ENCODE measurements at regions of chr17 and their contacts with region 1.

Region 1: GRCh38 chr17:35119368-35120165 is at the start of gene RAD51D:
- DNase-seq: peak; percentile 87
- H3K4me3 ChIP-seq: peak within 1 kb of the TSS; percentile 93
- H3K27ac ChIP-seq: peak within 1 kb of the TSS; percentile 31
- H3K4me1 ChIP-seq: peaks cover 10% of the 10 kb centered on the region
- CTCF ChIP-seq: peak; percentile 90
- total RNA-seq, gene RAD51D: 18.9 and 22.4 TPM in 2 replicates

Region 2: DNA sequence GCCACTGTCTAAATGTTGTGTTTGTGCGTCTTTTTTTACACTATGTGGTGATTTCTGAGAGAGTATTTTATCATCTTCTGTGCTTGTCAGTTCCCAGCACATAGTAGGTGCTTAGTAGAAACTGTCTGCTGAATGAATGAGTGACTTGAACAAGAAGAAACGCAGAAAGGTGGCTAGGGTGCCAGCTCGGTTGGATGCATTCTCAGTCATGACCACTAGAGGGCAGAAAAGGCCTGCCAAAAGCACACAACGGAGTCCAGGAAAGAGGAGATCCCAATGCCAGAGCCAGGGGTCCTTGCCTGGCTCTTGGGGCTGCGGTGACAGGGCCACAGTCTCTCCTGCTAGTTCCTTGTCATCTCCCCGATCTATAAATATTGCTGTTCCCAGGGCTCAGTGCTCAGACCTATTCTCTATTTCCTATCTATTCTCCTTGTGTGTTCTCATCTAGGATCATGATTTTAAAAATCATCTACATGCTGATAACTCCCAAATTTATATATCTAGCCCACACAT is 699.3 kb before region 1 on chr17:
- CTCF ChIA-PET with region 1: no interaction called
- POLR2A ChIA-PET with region 1: no interaction called
- intact Hi-C with region 1: loop called (anchors 10 kb)
- DNase-seq: peak; percentile 76
- H3K4me3 ChIP-seq: no peak overlapping the region
- H3K27ac ChIP-seq: no peak overlapping the region
- H3K4me1 ChIP-seq: no peaks in the 10 kb centered on the region
- CTCF ChIP-seq: peak; percentile 99

Region 3: DNA sequence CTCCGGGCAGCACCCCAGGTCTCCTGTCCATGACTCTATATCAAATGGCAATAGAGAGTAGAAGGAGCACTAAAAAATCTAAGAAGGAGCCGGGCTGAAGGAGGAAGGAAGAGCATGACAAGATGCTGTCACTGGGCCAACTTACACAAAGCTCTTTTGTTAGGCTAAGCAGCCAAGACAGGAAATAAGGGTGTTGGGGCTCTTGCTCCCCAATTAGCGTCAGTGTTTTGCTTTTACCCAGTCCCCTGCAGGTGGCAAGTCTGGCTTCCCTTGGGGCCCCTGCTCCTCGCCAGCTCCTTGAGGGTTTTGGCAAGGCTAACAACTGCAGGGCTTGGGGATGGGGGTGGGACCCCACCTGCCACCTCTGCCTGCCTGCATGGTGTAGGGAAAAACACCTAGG is 278.8 kb before region 1 on chr17:
- CTCF ChIA-PET with region 1: no interaction called
- POLR2A ChIA-PET with region 1: no interaction called
- intact Hi-C with region 1: loop called (anchors 10 kb)
- DNase-seq: peak; percentile 89
- H3K4me3 ChIP-seq: peak overlapping the region; percentile 39
- H3K27ac ChIP-seq: peak overlapping the region; percentile 84
- H3K4me1 ChIP-seq: peaks cover 66% of the 10 kb centered on the region
- CTCF ChIP-seq: no peak

Region 4: DNA sequence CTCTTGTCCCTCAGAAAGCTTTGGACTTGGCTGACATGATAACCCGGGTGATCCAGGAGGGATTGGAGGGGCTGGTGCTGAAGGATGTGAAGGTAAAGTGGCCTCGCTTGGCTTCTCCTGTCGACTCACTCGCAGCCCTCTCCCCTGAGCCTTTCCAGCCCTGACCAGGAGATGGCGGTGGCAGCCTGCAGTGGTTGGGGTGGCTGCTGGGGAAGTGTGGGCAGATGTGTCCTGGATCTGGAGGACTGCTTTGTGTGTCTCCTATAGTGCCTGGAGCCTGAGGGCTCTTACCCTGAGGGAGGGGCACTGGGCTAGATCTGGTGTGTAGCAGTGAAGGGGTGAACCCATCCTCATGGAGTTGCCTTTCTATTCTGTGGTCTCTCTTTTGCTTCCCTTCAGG is 121.4 kb before region 1 on chr17:
- CTCF ChIA-PET with region 1: no interaction called
- POLR2A ChIA-PET with region 1: no interaction called
- intact Hi-C with region 1: loop called (anchors 2 kb)
- DNase-seq: peak; percentile 63
- H3K4me3 ChIP-seq: no peak overlapping the region
- H3K27ac ChIP-seq: no peak overlapping the region
- H3K4me1 ChIP-seq: no peaks in the 10 kb centered on the region
- CTCF ChIP-seq: peak; percentile 81

Region 5: DNA sequence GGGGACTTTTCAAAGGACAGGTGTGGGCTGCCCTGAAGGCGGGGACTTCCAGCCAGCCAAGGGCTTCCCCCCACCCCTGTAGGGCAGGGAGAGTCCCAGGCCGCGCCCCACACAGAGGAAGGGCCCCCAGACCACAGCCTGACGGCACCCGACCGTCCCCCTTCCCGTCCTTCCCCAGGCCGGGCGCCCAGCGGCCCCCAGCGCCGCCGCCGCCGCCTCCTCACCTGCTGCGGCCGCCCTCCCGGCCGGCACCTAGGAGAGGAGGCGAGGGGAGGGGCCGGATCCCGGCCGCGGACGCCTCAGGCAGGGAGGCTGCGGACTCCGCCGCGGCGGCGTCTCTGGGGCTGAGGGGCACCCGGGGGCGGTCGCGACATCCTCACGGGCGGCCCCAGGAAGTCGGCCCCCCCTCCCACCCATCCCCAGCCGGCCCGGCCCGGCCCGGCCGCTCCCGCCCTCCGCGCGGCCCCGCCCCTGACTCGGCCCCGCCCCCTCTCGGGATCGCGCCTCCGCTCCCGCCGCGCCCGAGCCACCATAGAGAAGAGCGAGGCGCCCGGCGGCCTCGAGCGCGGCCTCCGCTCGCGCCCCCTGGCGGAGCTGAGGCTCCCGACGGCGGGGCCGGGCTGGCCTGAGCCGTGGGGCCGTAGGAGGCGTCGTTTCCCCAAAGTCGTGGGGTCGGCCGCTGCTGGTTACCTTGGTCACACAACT is 30.5 kb before region 1 on chr17:
- CTCF ChIA-PET with region 1: interaction called, 5 read pairs
- POLR2A ChIA-PET with region 1: interaction called, 6 read pairs
- intact Hi-C with region 1: loop called (anchors 2 kb)
- DNase-seq: peak; percentile 91
- H3K4me3 ChIP-seq: peak overlapping the region; percentile 85
- H3K27ac ChIP-seq: peak overlapping the region; percentile 34
- H3K4me1 ChIP-seq: peaks cover 27% of the 10 kb centered on the region
- CTCF ChIP-seq: peak; percentile 74